ENCODE measurements at regions of chr2 and their contacts with region 1.

Region 1: DNA sequence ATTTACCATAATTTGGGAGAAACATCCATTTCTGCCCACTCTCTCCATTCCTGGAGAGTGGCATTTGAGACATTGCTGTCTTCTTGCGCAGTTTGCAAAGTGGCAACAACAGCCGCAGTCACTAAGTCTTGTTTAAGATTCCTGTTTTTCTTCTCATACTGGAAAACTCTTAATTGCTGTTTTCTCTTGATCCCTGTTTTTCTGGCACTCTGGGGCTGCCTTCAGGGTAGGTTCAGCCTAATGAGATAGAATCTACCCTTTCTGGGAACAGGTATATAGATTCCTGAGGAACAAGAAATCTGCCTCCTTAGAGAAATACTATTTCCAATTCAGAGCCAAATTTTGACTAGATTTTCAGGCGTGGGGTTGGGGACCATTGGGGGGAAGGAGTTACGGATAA is 36.2 kb upstream of the FN1 start:
- DNase-seq: no peak
- ATAC-seq: no peak
- H3K4me3 ChIP-seq: no peak overlapping the region
- H3K27ac ChIP-seq: no peak overlapping the region
- H3K4me1 ChIP-seq: no peaks in the 10 kb centered on the region
- H3K27me3 ChIP-seq: no peaks in the 10 kb centered on the region
- CTCF ChIP-seq: no peak

Region 2: GRCh38 chr2:215917953-215918620 is 446.0 kb after region 1 on chr2:
- intact Hi-C with region 1: loop called (anchors 5 kb)
- DNase-seq: no peak
- ATAC-seq: no peak
- H3K4me3 ChIP-seq: no peak overlapping the region
- H3K27ac ChIP-seq: peak overlapping the region; percentile 36
- H3K4me1 ChIP-seq: no peaks in the 10 kb centered on the region
- H3K27me3 ChIP-seq: no peaks in the 10 kb centered on the region
- CTCF ChIP-seq: no peak

Measured in upper lobe of right lung (tissue), 1 donor.